CD4-positive, alpha-beta memory T cell (primary cell): ENCODE measurements at regions of chr6 and their contacts with region 1.

Region 1: GRCh38 chr6:53342217-53342616 is 6.5 kb downstream of the ELOVL5 start:
- DNase-seq: no peak
- H3K4me3 ChIP-seq: no peak overlapping the region
- H3K4me3 Mint-ChIP-seq: peak overlapping the region in 6 of 8 donors; percentile 41 to 63 (median 54)
- H3K27ac ChIP-seq: no peak overlapping the region
- H3K27ac Mint-ChIP-seq: peak overlapping the region; percentile 37 to 98 (median 78)
- H3K4me1 ChIP-seq: peaks cover 95% of the 10 kb centered on the region
- H3K4me1 Mint-ChIP-seq: peaks cover 87 to 95% (median 91%) of the 10 kb centered on the region in 4 donors
- H3K27me3 ChIP-seq: no peaks in the 10 kb centered on the region
- H3K27me3 Mint-ChIP-seq: no peaks in the 10 kb centered on the region

Region 2: GRCh38 chr6:53326372-53327016 is 15.7 kb before region 1 on chr6:
- CTCF ChIA-PET with region 1: interaction called, 11 read pairs
- POLR2A ChIA-PET with region 1: interaction called, 32 read pairs
- intact Hi-C with region 1: no loop called
- DNase-seq: no peak
- H3K4me3 ChIP-seq: no peak overlapping the region
- H3K4me3 Mint-ChIP-seq: peak overlapping the region in 3 of 8 donors; percentile 23 to 52 (median 40)
- H3K27ac ChIP-seq: no peak overlapping the region
- H3K27ac Mint-ChIP-seq: peak overlapping the region; percentile 37 to 85 (median 75)
- H3K4me1 ChIP-seq: peaks cover 86% of the 10 kb centered on the region
- H3K4me1 Mint-ChIP-seq: peaks cover 63 to 83% (median 72%) of the 10 kb centered on the region in 4 donors
- H3K27me3 ChIP-seq: no peaks in the 10 kb centered on the region
- H3K27me3 Mint-ChIP-seq: no peaks in the 10 kb centered on the region

Region 3: GRCh38 chr6:53916804-53917463 is 574.7 kb after region 1 on chr6:
- CTCF ChIA-PET with region 1: no interaction called
- POLR2A ChIA-PET with region 1: no interaction called
- intact Hi-C with region 1: no loop called
- DNase-seq: no peak
- H3K4me3 ChIP-seq: no peak overlapping the region
- H3K4me3 Mint-ChIP-seq: no peak overlapping the region
- H3K27ac ChIP-seq: no peak overlapping the region
- H3K27ac Mint-ChIP-seq: no peak overlapping the region
- H3K4me1 ChIP-seq: no peaks in the 10 kb centered on the region
- H3K4me1 Mint-ChIP-seq: no peaks in the 10 kb centered on the region
- H3K27me3 ChIP-seq: no peaks in the 10 kb centered on the region
- H3K27me3 Mint-ChIP-seq: no peaks in the 10 kb centered on the region